Activated naive CD4-positive, alpha-beta T cell treated with anti-CD3 and anti-CD28 coated beads, Interleukin-2, amount 10 ng/mL, durations not matched to agents 7 days and 5 days (primary cell): ENCODE measurements at regions of chr13 and their contacts with region 1.

Region 1: GRCh38 chr13:24693862-24694471 is 13.8 kb downstream of the ATP12A start:
- DNase-seq: peak; percentile 59
- H3K4me3 Mint-ChIP-seq: peak overlapping the region; percentile 43
- H3K27ac Mint-ChIP-seq: no peak overlapping the region
- H3K4me1 Mint-ChIP-seq: peaks cover 10% of the 10 kb centered on the region
- H3K27me3 Mint-ChIP-seq: peaks cover 67% of the 10 kb centered on the region

Region 2: DNA sequence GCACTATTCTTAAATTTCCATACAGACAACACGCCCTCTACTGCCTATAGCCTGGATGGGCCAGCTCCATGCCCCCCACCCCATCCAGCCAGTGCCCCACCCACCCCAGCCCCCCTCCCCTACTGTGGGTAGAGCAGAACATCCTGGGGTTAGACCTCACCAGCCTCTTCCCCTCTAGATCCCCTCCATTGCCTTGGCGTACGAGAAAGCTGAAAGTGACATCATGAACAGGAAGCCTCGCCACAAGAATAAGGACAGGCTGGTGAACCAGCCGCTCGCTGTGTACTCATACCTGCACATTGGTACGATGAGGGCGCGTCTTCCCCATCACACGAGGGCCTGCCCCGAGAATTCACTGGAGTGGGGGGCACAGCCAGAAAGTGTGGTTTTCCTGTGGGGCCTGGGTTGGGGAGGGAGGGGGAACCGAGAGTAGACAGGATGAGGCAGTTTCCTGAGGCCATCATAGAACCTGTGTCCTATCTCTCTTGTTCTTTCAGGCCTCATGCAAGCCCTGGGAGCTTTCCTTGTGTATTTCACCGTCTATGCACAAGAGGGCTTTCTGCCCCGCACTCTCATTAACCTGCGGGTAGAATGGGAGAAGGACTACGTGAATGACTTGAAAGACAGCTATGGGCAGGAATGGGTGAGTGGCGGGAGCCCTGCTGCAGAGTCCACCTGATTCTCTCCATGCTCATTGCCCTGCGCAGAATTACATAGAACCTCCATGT is 15.4 kb after region 1 on chr13:
- CTCF ChIA-PET with region 1: interaction called, 47 read pairs
- DNase-seq: peak; percentile 81
- H3K4me3 Mint-ChIP-seq: peak overlapping the region; percentile 41
- H3K27ac Mint-ChIP-seq: peak overlapping the region; percentile 85
- H3K4me1 Mint-ChIP-seq: peaks cover 29% of the 10 kb centered on the region
- H3K27me3 Mint-ChIP-seq: peaks cover 45% of the 10 kb centered on the region

Region 3: GRCh38 chr13:24716011-24716410 is 22.0 kb after region 1 on chr13:
- CTCF ChIA-PET with region 1: interaction called, 47 read pairs
- DNase-seq: no peak
- H3K4me3 Mint-ChIP-seq: no peak overlapping the region
- H3K27ac Mint-ChIP-seq: no peak overlapping the region
- H3K4me1 Mint-ChIP-seq: peaks cover 3% of the 10 kb centered on the region
- H3K27me3 Mint-ChIP-seq: peaks cover 52% of the 10 kb centered on the region

Region 4: GRCh38 chr13:24734950-24735349 is 41.0 kb after region 1 on chr13:
- CTCF ChIA-PET with region 1: interaction called, 76 read pairs
- DNase-seq: no peak
- H3K4me3 Mint-ChIP-seq: no peak overlapping the region
- H3K27ac Mint-ChIP-seq: no peak overlapping the region
- H3K4me1 Mint-ChIP-seq: no peaks in the 10 kb centered on the region
- H3K27me3 Mint-ChIP-seq: peaks cover 5% of the 10 kb centered on the region